ENCODE measurements at regions of chr11 and their contacts with region 1.

Region 1: DNA sequence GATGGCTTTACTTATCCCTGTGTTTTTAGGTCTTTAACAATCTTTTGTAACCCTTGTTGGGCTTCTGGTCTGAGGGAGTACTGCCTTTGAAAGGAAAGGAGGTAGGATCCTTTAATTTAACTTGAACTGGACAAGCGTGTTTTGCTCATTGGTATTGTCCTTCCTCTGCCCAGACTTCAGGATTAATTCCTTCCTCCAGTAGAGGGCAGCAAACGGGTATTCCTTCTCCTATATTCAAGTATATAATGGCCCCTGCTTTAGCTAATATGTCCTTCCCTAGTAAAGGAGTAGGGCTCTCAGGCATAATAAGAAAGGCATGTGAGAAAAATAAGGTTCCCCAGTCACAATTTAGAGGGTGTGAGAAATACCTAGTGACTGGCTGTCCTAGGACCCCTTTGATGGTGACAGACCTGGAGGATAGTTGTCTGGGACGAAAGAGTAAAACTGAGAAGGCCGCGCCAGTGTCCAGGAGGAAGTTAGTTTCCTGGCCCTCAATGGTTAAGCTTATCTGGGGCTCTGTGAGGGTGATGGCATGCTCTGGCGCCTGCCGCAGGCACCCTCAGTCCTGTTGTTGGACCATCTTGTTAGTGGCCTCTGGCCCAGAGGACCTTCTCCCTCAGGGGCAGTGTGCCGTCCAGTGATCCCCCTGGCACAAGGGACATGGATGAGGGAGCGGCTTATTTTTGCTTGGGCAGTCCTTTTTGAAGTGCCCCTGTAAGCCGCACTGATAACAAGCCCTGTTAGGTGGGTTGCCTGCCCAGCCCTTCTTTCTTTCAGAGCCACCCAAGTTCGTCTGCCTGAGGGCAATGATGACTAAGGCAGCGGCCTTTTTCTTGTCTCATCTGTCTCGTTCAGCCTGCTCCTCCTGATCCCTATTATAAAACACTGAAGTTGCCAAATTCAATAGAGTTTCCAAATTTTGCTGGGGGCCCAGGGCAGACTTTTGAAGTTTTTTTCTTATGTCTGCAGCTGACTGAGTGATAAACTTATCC is 51.8 kb downstream of the C11orf71 start:
- DNase-seq: peak in 7 of 9 donors; percentile 14 to 55 (median 35)
- ATAC-seq: peak; percentile 46
- H3K4me3 ChIP-seq: no peak overlapping the region
- H3K4me3 Mint-ChIP-seq: no peak overlapping the region
- H3K27ac ChIP-seq: no peak overlapping the region
- H3K27ac Mint-ChIP-seq: no peak overlapping the region
- H3K4me1 ChIP-seq: peaks cover 0 to 3% of the 10 kb centered on the region in 2 donors
- H3K4me1 Mint-ChIP-seq: peaks cover 0 to 13% (median 9%) of the 10 kb centered on the region in 7 donors
- H3K27me3 ChIP-seq: no peaks in the 10 kb centered on the region
- H3K27me3 Mint-ChIP-seq: no peaks in the 10 kb centered on the region

Region 2: GRCh38 chr11:114280696-114281095 is 67.8 kb before region 1 on chr11:
- CTCF ChIA-PET with region 1: interaction called, 3 read pairs
- POLR2A ChIA-PET with region 1: no interaction called
- intact Hi-C with region 1: loop called in 1 of 2 experiments (anchors 2 kb)
- DNase-seq: peak in 5 of 9 donors; percentile 24 to 39 (median 26)
- ATAC-seq: no peak
- H3K4me3 ChIP-seq: no peak overlapping the region
- H3K4me3 Mint-ChIP-seq: no peak overlapping the region
- H3K27ac ChIP-seq: no peak overlapping the region
- H3K27ac Mint-ChIP-seq: peak overlapping the region in 1 of 9 donors; percentile 56
- H3K4me1 ChIP-seq: no peaks in the 10 kb centered on the region
- H3K4me1 Mint-ChIP-seq: no peaks in the 10 kb centered on the region
- H3K27me3 ChIP-seq: no peaks in the 10 kb centered on the region
- H3K27me3 Mint-ChIP-seq: peaks cover 5 to 34% (median 18%) of the 10 kb centered on the region in 5 donors

Region 3: GRCh38 chr11:114317787-114318137 is 30.7 kb before region 1 on chr11:
- CTCF ChIA-PET with region 1: interaction called, 3 read pairs
- POLR2A ChIA-PET with region 1: interaction called, 3 read pairs
- intact Hi-C with region 1: loop called in 1 of 2 experiments (anchors 1 kb)
- DNase-seq: no peak
- ATAC-seq: no peak
- H3K4me3 ChIP-seq: no peak overlapping the region
- H3K4me3 Mint-ChIP-seq: peak overlapping the region in 6 of 10 donors; percentile 28 to 79 (median 57)
- H3K27ac ChIP-seq: peak overlapping the region; percentile 66
- H3K27ac Mint-ChIP-seq: peak overlapping the region in 8 of 9 donors; percentile 73 to 98 (median 92)
- H3K4me1 ChIP-seq: peaks cover 0 to 50% of the 10 kb centered on the region in 2 donors
- H3K4me1 Mint-ChIP-seq: peaks cover 16 to 73% (median 56%) of the 10 kb centered on the region in 7 donors
- H3K27me3 ChIP-seq: no peaks in the 10 kb centered on the region
- H3K27me3 Mint-ChIP-seq: peaks cover 0 to 3% (median 0%) of the 10 kb centered on the region in 5 donors

Region 4: DNA sequence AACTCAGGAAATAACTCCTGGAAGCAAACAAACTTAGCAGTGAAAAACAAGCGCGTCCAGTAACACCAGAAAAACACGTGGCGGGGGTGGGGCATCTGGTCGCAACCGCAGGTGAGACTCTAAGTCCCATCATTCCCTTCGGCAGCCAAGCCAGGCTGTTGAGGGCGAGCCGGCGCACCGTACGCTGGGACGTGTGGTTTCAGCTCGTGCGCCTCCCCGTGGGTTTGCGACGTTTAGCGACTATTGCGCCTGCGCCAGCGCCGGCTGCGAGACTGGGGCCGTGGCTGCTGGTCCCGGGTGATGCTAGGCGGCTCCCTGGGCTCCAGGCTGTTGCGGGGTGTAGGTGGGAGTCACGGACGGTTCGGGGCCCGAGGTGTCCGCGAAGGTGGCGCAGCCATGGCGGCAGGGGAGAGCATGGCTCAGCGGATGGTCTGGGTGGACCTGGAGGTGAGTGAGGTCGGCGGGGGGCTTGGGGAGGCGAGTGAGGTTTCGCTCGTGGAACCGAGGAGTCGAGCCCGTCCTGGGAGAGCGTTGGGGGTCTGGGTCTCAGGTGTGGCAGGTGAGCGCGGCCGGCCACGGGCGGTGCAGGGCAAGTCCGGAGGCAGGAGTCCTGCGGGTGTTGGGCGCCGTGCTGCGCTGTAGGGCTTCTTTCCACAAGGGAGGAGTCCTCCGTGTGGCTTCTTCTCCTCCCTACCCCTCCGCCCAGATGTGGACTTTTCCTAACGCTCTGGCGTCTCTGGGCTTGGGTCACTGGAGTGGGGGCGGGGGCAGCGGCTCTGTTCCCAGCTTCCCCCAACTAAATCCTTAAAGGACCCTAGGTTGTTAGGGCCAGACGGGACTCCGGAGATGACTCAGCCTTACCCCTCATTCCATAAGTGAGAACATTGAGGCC is 91.0 kb after region 1 on chr11 and contains the start of gene REXO2:
- CTCF ChIA-PET with region 1: no interaction called
- POLR2A ChIA-PET with region 1: no interaction called
- intact Hi-C with region 1: loop called (anchors 1 to 5 kb)
- DNase-seq: peak; percentile 89 to 94 (median 92)
- ATAC-seq: peak; percentile 100
- H3K4me3 ChIP-seq: peak within 1 kb of the TSS; percentile 96
- H3K4me3 Mint-ChIP-seq: peak within 1 kb of the TSS; percentile 92 to 98 (median 96)
- H3K27ac ChIP-seq: peak within 1 kb of the TSS; percentile 79
- H3K27ac Mint-ChIP-seq: peak within 1 kb of the TSS; percentile 84 to 95 (median 93)
- H3K4me1 ChIP-seq: peaks cover 18 to 20% of the 10 kb centered on the region in 2 donors
- H3K4me1 Mint-ChIP-seq: peaks cover 22 to 56% (median 36%) of the 10 kb centered on the region in 7 donors
- H3K27me3 ChIP-seq: no peaks in the 10 kb centered on the region
- H3K27me3 Mint-ChIP-seq: peaks cover 0 to 4% (median 0%) of the 10 kb centered on the region in 5 donors
- total RNA-seq, gene REXO2: 33.8 to 105 (median 56.0) TPM

Region 5: DNA sequence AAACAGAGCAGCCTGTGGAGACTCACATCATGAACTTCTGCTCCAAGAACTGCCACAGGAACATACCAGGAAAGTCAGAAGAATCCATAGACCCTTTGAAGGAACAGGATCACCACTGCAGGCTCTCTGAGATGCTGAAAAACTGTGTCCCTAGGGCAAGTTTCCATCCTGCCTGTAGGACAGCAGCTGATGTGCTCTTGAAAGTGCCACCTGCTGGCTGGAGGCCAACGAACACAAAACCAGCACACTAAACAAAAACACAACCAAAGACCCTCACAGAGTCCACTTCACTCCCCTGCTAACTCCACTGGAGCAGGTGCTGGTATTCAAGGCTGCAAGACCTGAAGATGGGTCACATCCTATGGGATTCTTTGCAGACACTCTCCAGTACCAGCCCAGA is 223.2 kb after region 1 on chr11:
- CTCF ChIA-PET with region 1: no interaction called
- POLR2A ChIA-PET with region 1: no interaction called
- intact Hi-C with region 1: loop called in 1 of 2 experiments (anchors 1 kb)
- DNase-seq: no peak
- ATAC-seq: no peak
- H3K4me3 ChIP-seq: no peak overlapping the region
- H3K4me3 Mint-ChIP-seq: no peak overlapping the region
- H3K27ac ChIP-seq: no peak overlapping the region
- H3K27ac Mint-ChIP-seq: no peak overlapping the region
- H3K4me1 ChIP-seq: no peaks in the 10 kb centered on the region
- H3K4me1 Mint-ChIP-seq: no peaks in the 10 kb centered on the region
- H3K27me3 ChIP-seq: no peaks in the 10 kb centered on the region
- H3K27me3 Mint-ChIP-seq: peaks cover 0 to 23% (median 13%) of the 10 kb centered on the region in 5 donors

Region 6: DNA sequence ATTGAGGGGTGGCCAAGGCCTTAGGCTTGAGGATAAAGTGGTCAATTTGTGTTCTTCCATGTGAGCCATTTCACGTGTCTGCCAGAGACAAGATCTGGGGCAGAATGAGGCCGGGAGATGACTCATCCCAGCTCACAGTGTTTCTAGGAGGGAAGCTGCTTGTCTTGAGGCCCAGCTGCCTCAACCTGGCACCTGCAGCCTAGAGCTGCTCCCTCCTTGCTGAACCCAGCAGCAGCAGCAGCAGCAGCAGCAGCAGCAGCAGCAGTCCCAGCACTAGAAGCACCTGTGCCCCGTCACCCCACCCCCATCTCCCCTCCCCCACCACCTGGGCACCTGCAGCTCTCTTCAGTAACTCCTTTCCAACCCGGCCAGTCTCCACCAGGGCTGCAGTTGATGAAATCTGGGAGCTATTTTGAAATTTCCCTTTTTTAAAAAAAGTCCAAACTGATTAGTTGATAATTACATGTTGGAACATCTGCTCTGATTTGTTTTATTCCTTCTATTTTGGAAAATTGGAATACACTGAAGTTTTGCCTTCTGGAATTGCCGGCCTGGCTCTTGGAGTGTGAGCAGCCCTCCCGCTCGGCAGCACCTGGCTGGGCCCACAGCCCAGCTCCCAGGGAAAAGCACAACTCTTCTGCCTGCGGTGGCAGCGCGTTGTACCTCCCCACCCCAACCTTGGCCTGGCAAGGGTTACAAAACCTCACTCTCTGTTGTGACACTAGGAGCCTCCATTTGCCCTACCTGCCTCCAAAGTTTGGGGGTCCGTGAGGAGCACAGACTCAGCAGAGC is 473.3 kb after region 1 on chr11:
- CTCF ChIA-PET with region 1: no interaction called
- POLR2A ChIA-PET with region 1: no interaction called
- intact Hi-C with region 1: no loop called
- DNase-seq: no peak
- ATAC-seq: no peak
- H3K4me3 ChIP-seq: no peak overlapping the region
- H3K4me3 Mint-ChIP-seq: no peak overlapping the region
- H3K27ac ChIP-seq: no peak overlapping the region
- H3K27ac Mint-ChIP-seq: no peak overlapping the region
- H3K4me1 ChIP-seq: no peaks in the 10 kb centered on the region
- H3K4me1 Mint-ChIP-seq: no peaks in the 10 kb centered on the region
- H3K27me3 ChIP-seq: no peaks in the 10 kb centered on the region
- H3K27me3 Mint-ChIP-seq: peaks cover 0 to 14% (median 7%) of the 10 kb centered on the region in 5 donors